ENCODE measurements at regions of chr22 and their contacts with region 1.

Region 1: DNA sequence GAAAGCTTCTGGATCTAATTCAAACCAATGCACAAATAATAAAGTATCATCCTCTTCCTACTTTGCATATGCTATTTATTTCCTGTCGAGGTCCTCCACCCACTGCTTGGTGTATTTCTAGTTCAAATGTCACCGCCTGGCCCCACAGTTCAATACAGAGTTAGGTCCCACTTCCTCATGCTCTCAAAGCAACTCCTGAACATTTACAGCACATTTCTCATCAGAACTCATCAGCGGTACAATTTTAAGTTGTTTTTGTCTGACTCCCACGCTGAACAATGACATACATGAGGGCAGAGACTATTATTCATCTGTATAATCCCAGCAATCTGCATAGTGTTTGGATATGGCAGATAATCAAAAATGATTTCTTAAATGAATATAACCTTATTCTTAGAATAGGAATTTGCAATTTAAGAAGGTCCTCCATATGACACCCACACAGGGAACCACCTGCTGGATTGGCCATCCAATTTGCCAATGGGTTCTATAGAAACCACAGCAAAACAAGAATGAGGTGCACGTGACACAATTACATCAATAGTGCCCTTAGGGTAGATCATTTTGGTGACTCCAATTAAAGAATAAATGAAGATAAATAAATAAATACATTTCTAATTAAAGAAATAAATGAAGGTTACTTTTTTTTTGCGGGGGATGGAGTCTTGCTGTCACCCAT is 54.2 kb downstream of the SLC25A17 start:
- DNase-seq: peak in 4 of 5 donors; percentile 11 to 25 (median 17)
- H3K4me3 ChIP-seq: no peak overlapping the region
- H3K4me3 Mint-ChIP-seq: peak overlapping the region in 7 of 8 donors; percentile 10 to 77 (median 48)
- H3K27ac ChIP-seq: no peak overlapping the region
- H3K27ac Mint-ChIP-seq: peak overlapping the region; percentile 64 to 94 (median 88)
- H3K4me1 ChIP-seq: peaks cover 19% of the 10 kb centered on the region
- H3K4me1 Mint-ChIP-seq: peaks cover 11 to 19% (median 15%) of the 10 kb centered on the region in 4 donors
- H3K27me3 ChIP-seq: no peaks in the 10 kb centered on the region
- H3K27me3 Mint-ChIP-seq: no peaks in the 10 kb centered on the region

Region 2: DNA sequence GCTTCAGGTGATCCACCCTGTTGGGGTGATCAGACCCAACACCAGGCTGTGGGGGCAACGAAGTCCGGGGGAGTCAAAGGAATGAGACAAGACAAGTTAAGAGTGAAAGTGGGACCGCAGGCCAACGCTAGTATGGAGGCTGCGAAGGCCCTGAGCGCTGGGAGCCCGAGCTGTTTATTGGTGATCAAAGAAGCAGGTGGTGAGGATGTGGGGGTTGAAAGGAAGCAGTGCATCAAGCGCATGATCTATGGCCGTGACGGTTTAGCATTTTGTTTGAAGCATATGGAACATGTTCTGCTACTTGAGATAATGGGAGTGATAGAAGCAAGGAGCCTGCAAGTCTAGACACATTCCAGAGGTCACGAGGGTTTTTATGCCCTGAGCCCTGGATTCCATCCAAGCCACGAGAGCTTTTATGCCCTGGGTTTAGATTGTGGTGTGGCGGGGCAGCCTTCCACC is 36.1 kb before region 1 on chr22:
- CTCF ChIA-PET with region 1: interaction called, 5 read pairs
- POLR2A ChIA-PET with region 1: interaction called, 6 read pairs
- intact Hi-C with region 1: loop called (anchors 5 kb)
- DNase-seq: peak; percentile 67 to 84 (median 76)
- H3K4me3 ChIP-seq: peak overlapping the region in 1 of 2 donors; percentile 17
- H3K4me3 Mint-ChIP-seq: peak overlapping the region; percentile 32 to 82 (median 73)
- H3K27ac ChIP-seq: peak overlapping the region; percentile 30
- H3K27ac Mint-ChIP-seq: peak overlapping the region; percentile 83 to 97 (median 95)
- H3K4me1 ChIP-seq: peaks cover 69% of the 10 kb centered on the region
- H3K4me1 Mint-ChIP-seq: peaks cover 35 to 63% (median 49%) of the 10 kb centered on the region in 4 donors
- H3K27me3 ChIP-seq: no peaks in the 10 kb centered on the region
- H3K27me3 Mint-ChIP-seq: no peaks in the 10 kb centered on the region